ENCODE measurements at regions of chr10 and their contacts with region 1.

Region 1: GRCh38 chr10:17847585-17848296 is 38.6 kb downstream of the MRC1 start:
- DNase-seq: no peak
- ATAC-seq: peak in 2 of 4 donors; percentile 2 to 44
- H3K4me3 ChIP-seq: no peak overlapping the region
- H3K27ac ChIP-seq: no peak overlapping the region
- H3K4me1 ChIP-seq: peaks cover 0 to 12% (median 0%) of the 10 kb centered on the region in 12 donors
- H3K27me3 ChIP-seq: no peaks in the 10 kb centered on the region
- CTCF ChIP-seq: peak; percentile 24 to 61 (median 48)
- POLR2A ChIP-seq: no peak

Region 2: DNA sequence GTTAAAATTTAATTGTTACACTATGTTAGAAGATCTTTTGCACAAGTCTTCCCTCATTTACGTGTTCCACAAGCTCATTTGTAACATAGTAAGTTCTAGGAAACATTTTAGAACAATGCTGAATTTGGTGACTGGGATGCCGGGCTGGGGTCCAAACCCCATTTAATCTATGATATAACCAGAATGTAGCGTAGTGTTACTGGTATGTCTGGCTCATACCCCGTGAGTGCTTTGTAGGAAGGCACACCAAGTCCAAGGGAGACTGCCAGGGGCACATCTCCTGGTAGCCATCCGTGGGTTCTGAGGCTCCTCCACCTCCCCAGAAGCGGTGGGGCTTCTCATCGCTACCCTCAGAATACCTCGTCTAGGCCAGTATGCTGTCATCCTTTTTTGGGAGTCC is 117.1 kb before region 1 on chr10:
- intact Hi-C with region 1: no loop called
- DNase-seq: peak in 4 of 5 donors; percentile 31 to 59 (median 50)
- ATAC-seq: peak; percentile 70 to 91 (median 86)
- H3K4me3 ChIP-seq: no peak overlapping the region
- H3K27ac ChIP-seq: peak overlapping the region in 7 of 12 donors; percentile 28 to 77 (median 72)
- H3K4me1 ChIP-seq: peaks cover 0 to 19% (median 8%) of the 10 kb centered on the region in 12 donors
- H3K27me3 ChIP-seq: no peaks in the 10 kb centered on the region
- CTCF ChIP-seq: no peak
- POLR2A ChIP-seq: no peak

Region 3: DNA sequence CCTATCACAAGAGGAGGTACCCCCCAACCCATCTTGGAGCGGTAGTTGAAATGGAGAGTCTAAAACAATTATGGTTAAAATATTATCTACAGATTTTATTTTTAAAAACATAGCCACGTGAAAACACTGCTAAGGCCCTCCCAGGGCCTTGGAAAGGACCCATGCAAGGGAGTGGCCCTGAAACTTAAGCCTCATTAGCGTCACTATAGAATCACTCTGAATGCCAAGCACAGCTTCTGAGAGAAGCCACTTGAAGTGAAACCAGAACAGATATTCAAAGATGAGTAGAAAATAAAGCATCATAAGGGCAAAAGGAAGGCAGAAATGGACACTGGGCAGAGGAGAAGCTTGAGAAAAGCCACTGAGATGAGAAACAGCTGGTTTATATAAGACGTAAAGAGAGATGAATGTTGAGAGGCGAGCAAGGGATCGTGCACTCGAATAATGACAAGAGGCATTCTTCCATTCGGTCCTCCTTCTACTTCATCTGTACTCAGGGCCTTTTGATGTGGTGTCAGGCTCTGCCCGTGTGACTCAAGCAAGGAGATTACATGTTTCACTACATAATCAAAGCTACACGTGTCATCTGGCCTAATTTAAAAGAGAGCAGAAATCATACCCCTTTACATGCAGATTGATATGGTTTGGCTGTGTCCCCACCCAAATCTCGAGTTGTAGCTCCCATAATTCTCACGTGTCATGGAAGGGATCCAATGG is 70.6 kb after region 1 on chr10:
- intact Hi-C with region 1: no loop called
- DNase-seq: no peak
- ATAC-seq: peak in 1 of 4 donors; percentile 54
- H3K4me3 ChIP-seq: no peak overlapping the region
- H3K27ac ChIP-seq: peak overlapping the region in 1 of 12 donors; percentile 37
- H3K4me1 ChIP-seq: peaks cover 0 to 36% (median under 1%) of the 10 kb centered on the region in 12 donors
- H3K27me3 ChIP-seq: no peaks in the 10 kb centered on the region
- CTCF ChIP-seq: no peak
- POLR2A ChIP-seq: no peak

Region 4: DNA sequence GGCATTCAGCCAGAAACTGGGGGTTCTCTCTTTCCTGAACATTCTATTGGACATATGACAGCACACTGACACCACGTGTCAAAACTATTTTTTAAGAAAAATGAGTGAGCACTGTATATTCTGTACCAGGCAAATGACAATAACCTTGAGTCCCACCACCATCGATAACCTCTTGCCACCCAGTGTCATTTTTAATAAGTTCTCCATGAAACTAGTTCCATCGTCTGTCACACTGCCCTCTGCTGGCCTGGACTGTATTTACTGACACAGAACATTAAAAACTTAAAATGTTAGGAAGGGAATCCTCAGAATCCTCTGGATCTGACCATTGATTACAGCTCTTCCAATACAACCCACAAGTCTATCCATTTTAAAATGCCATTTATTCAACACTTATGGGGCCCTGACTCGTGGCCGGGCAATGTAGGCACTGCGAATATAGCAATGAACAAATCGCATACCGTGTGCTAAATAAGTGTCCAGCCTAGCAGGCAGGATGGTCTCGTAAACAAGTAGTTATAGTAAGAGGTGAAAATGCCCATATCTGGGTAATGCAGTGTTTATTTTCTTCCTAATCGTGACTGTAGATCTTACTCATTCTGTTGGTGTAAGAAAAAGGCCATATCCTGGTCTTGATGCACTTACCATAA is 256.6 kb after region 1 on chr10:
- intact Hi-C with region 1: loop called in 1 of 10 experiments (anchors 10 kb)
- DNase-seq: peak in 4 of 5 donors; percentile 36 to 59 (median 42)
- ATAC-seq: no peak
- H3K4me3 ChIP-seq: no peak overlapping the region
- H3K27ac ChIP-seq: no peak overlapping the region
- H3K4me1 ChIP-seq: no peaks in the 10 kb centered on the region
- H3K27me3 ChIP-seq: no peaks in the 10 kb centered on the region
- CTCF ChIP-seq: peak; percentile 51 to 76 (median 66)
- POLR2A ChIP-seq: no peak

Region 5: GRCh38 chr10:18214691-18215563 is 367.2 kb after region 1 on chr10:
- intact Hi-C with region 1: loop called (anchors 1 to 5 kb)
- DNase-seq: peak in 1 of 5 donors; percentile 29
- ATAC-seq: peak in 3 of 4 donors; percentile 70 to 81 (median 80)
- H3K4me3 ChIP-seq: peak overlapping the region in 1 of 12 donors; percentile 20
- H3K27ac ChIP-seq: peak overlapping the region in 1 of 12 donors; percentile 9
- H3K4me1 ChIP-seq: peaks cover 0 to 25% (median 2%) of the 10 kb centered on the region in 12 donors
- H3K27me3 ChIP-seq: no peaks in the 10 kb centered on the region
- CTCF ChIP-seq: peak; percentile 63 to 90 (median 78)
- POLR2A ChIP-seq: no peak

Region 6: GRCh38 chr10:18238870-18239485 is 391.2 kb after region 1 on chr10:
- intact Hi-C with region 1: loop called in 1 of 10 experiments (anchors 5 kb)
- DNase-seq: no peak
- ATAC-seq: no peak
- H3K4me3 ChIP-seq: no peak overlapping the region
- H3K27ac ChIP-seq: peak overlapping the region in 1 of 12 donors; percentile 34
- H3K4me1 ChIP-seq: peaks cover 0 to 14% (median 3%) of the 10 kb centered on the region in 12 donors
- H3K27me3 ChIP-seq: no peaks in the 10 kb centered on the region
- CTCF ChIP-seq: peak; percentile 27 to 73 (median 60)
- POLR2A ChIP-seq: no peak

Region 7: DNA sequence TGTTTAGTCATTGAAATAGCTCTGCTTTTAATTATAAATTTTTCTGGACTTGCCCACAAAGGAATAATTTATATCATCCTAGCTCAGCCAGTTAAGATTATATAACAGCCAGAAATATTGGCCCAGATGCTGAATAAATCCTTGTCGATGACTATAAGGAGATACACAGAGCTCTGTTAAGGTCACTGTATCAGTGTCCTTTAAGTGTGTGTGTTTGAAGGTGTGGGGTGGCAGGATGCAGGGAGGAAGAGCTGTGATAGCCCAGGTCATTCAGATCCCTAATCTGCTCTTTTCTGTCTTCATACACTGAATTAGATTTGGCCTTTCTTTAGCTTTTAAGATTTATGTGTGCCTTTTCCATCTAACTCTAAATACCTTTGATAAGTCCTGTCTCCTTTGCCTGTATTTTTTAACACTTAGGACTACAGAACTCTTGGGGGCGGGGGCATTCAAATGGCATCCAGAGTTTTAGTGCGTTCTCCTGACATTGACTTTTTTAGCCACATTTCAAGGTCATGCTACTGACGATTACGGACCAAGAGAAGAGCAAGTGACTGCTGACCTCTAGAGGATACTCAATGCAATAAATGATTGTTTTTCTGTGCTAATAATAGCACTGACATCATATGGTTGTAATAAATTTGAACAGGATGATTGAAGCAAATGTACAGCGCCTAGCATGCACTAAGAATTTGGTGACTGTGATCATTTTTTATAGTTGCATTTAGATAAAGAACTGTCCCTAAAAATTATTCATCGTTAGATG is 464.8 kb after region 1 on chr10:
- intact Hi-C with region 1: loop called in 2 of 10 experiments (anchors 2 to 10 kb)
- DNase-seq: peak in 1 of 5 donors; percentile 19
- ATAC-seq: peak; percentile 69 to 82 (median 74)
- H3K4me3 ChIP-seq: peak overlapping the region in 2 of 12 donors; percentile 6 to 7
- H3K27ac ChIP-seq: peak overlapping the region; percentile 61 to 92 (median 82)
- H3K4me1 ChIP-seq: peaks cover 0 to 25% (median 2%) of the 10 kb centered on the region in 12 donors
- H3K27me3 ChIP-seq: no peaks in the 10 kb centered on the region
- CTCF ChIP-seq: peak in 11 of 12 donors; percentile 27 to 63 (median 42)
- POLR2A ChIP-seq: no peak